Mammary epithelial cell (primary cell): ENCODE measurements at regions of chr17 and their contacts with region 1.

Region 1: GRCh38 chr17:47840740-47841603 is at the start of gene SCRN2:
- DNase-seq: peak; percentile 82
- H3K4me3 ChIP-seq: peak within 1 kb of the TSS; percentile 72 to 76 (median 74)
- H3K27ac ChIP-seq: peak within 1 kb of the TSS; percentile 24
- H3K4me1 ChIP-seq: peaks cover 58% of the 10 kb centered on the region
- H3K27me3 ChIP-seq: no peaks in the 10 kb centered on the region
- CTCF ChIP-seq: peak; percentile 85 to 99
- total RNA-seq, gene SCRN2: 29.0 to 36.3 TPM

Region 2: DNA sequence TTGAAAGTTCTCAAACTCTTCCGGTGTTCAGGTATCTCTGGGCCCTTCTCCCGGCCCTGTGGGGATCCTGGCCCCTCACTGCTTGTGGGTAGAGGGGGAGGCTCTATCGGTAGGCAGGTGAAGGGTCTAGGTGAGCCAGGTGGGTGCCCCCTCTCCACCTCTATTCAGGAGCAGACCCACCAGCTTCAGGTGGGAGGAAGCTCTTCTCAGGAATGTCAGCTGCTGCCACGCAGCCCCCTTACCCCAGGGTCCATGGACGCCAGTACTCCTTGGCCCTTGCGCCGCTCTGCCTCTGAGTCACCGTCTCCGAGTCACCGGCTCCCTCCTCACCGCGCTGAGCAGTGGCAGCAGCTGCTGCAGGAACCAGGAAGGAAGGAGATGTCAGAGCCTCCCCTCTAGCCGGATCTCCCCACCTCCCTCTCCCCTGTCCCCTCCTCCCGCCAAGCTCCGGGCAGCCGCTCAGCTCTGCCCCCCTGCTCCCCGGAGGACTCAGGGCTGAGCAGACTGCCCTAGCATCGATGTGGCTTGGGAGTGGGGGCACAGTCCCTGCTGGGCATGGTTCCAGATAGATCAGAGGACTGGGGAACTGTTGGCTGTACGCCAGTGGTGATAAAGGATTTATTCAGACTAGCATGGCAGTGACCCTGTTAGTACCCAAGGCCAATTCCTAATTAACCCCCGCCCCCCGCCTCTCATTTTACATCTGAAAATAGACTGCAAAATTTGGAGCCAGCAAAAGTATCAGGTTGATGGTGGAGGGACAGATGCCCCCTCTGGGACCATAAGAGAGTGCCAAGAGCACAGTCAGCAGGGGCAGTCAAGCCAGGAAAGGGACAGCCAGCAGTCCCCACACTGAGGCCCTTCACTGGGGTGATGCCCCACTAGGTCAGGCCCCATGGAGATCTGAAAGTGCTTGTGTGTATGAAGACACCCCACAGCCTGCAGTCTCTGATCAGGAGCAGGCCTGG is 19.3 kb before region 1 on chr17 and contains the start of gene OSBPL7:
- CTCF ChIA-PET with region 1: no interaction called
- dilution Hi-C with region 1: no loop called
- in situ Hi-C with region 1: no loop called
- intact Hi-C with region 1: no loop called
- DNase-seq: peak; percentile 70
- H3K4me3 ChIP-seq: peak within 1 kb of the TSS; percentile 44 to 64 (median 60)
- H3K27ac ChIP-seq: no peak within 1 kb of the TSS
- H3K4me1 ChIP-seq: peaks cover 17% of the 10 kb centered on the region
- H3K27me3 ChIP-seq: no peaks in the 10 kb centered on the region
- CTCF ChIP-seq: no peak
- total RNA-seq, gene OSBPL7: 2.0 to 6.7 TPM

Region 3: DNA sequence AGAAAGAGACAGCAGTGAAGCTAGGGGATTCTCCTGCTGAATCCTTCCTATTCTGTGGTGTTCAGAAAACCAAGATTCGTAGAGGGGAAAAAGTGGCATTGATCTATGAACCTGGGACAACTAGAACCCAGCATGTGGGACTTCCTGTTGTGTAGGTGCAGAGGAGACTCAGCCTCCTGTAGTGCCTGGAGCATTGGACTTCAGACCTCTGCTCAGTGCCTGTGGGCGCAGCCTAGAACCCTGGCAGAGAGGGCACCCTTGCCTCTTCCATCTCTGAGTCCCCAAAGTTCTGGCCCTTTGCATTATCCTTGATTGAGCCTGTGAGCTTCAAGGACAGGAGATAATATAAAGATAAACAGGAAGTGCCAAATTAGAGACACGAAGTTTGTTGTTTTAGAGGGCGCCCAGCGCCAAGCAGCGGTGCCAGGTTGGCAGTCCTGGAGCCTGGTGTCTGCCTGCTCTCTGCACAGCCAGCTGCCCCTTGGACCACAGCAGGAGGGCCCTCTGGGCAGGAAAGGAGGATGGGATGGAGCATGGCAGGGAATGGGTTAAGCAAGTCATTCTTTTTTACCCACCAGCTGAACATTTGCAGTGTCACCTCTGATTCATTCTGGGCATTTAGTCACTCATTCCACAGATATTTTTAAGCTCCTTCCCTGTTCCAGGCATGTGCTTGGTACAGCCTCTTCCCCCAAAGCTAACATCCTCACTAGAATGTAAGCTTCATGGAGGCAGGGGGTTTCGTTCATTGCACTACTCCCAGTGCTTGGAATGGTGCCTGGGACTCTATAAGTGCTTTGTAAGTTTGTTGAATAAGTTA is 21.9 kb after region 1 on chr17:
- CTCF ChIA-PET with region 1: no interaction called
- dilution Hi-C with region 1: no loop called
- in situ Hi-C with region 1: no loop called
- intact Hi-C with region 1: loop called (anchors 1 kb)
- DNase-seq: peak; percentile 78
- H3K4me3 ChIP-seq: no peak overlapping the region
- H3K27ac ChIP-seq: peak overlapping the region; percentile 55
- H3K4me1 ChIP-seq: peaks cover 36% of the 10 kb centered on the region
- H3K27me3 ChIP-seq: no peaks in the 10 kb centered on the region
- CTCF ChIP-seq: no peak

Region 4: DNA sequence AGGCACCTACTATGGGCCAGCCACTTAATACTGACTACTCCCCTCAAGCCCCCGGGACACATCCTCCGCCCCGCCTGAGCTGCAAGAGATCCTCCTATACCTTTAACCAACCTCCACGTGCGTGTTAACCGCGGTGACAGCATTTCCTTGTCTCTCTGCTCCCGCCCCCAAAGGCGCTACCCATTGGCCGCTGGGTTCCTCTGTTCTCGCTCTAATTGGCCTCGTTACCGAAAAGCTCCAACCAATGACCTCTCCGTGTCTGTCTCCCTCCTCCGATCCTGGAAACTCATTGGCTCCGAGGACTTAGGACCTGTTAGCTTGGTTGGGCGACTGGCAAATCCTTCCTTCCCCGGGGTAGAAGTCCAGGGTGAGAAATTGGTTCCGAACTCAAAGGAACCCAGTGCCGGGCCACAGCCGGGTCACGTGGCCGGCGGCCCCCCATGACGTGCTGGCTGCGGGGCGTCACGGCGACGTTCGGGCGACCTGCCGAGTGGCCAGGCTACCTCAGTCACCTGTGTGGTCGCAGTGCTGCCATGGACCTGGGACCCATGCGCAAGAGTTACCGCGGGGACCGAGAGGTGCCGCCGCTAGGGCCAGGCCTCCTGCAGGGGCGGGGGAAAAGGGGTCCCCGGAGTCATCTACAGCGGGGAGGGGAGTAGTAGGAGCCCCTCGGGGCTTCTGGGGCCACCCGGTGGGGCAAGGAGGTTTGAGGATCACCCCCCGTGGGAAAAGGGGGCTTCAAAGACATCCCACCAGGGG is 100.4 kb after region 1 on chr17 and contains the start of gene PNPO:
- CTCF ChIA-PET with region 1: no interaction called
- dilution Hi-C with region 1: no loop called
- in situ Hi-C with region 1: loop called in 1 of 2 experiments (anchors 10 kb)
- intact Hi-C with region 1: no loop called
- DNase-seq: peak; percentile 99
- H3K4me3 ChIP-seq: peak within 1 kb of the TSS; percentile 65 to 78 (median 67)
- H3K27ac ChIP-seq: peak within 1 kb of the TSS; percentile 58
- H3K4me1 ChIP-seq: peaks cover 19% of the 10 kb centered on the region
- H3K27me3 ChIP-seq: no peaks in the 10 kb centered on the region
- CTCF ChIP-seq: peak in 1 of 2 donors; percentile 23
- total RNA-seq, gene PNPO: 63.5 to 89.5 TPM

Region 5: DNA sequence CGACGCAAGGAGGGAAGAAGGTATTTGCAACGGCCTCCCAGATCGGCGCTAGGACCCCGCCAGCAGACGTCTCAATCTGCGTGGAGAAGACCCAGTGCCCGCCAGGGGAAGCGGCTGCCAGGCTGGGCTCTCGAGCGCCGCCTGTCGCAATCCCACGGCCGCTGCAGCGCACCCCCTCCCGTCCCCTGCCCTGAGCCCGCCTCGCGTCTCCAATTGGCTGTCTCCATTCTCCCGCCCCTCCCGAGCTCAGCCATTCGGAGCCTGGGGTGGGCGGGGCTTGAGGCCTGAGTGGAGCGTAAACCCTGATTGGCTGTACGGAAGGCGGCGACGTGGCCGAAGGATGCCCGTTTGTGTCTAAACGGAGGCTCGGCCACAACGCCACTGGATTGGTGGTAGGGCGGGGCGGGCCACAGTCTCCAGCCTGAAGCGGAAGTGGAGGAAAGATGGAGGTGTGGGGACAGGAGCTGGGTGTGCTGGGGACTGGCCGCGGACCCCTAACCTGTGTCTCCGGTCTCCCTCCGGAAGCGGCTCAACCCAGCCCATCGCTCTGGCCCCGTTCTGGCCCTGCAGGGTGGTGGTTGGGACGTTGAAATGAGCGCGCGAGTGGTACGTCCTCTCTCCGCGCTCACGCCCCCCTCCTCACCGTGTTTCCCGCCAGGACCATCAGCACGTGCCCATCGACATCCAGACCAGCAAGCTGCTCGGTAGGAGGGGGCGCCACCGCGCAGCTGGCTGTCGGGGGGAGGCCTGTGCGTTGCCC is 129.9 kb after region 1 on chr17 and contains the start of gene CDK5RAP3:
- CTCF ChIA-PET with region 1: no interaction called
- dilution Hi-C with region 1: no loop called
- in situ Hi-C with region 1: no loop called
- intact Hi-C with region 1: loop called (anchors 1 kb)
- DNase-seq: peak; percentile 99
- H3K4me3 ChIP-seq: peak within 1 kb of the TSS; percentile 49 to 98 (median 78)
- H3K27ac ChIP-seq: peak within 1 kb of the TSS; percentile 60
- H3K4me1 ChIP-seq: peaks cover 27% of the 10 kb centered on the region
- H3K27me3 ChIP-seq: no peaks in the 10 kb centered on the region
- CTCF ChIP-seq: peak; percentile 72 to 93
- total RNA-seq, gene CDK5RAP3: 35.3 to 116 TPM